ENCODE measurements at regions of chr22 and their contacts with region 1.

Region 1: DNA sequence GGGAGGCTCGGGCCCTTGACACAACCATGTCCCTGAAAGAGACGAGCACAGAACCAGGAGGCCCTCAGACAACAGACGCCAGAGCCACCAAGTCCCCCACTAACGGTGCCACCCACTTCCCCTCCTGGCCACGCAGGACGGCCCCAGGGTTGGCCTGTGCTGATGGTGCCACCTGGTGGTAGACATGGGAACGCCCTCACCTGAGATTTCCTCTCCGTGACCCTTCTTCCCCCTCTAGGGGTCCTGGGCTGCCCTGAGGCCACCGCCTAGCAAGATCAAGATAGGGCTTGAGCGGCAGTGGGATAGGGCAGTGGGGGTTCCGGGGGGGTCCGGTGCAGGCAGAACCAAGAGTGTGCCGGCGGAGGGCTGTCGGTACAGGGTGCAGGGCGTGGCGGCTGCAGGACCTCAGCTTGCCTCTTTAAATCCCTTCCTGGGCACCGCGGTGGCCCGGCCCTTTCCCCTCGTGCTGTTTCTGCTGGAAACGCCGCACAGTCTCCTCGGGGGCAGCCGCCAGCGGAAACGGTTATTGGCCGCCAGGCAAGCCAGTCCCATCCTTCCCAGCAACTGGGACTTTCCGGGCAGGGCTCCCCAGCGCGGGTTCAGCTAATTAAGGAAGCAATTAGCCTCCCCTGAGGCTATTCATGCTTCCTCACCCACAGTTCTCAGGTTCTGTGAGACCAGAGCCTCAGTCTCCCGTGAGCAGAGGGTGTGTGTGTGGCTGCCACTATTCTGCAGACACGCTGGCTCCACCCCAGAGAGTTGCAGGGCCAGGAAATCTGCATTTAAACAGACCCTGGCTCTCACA is 5.5 kb upstream of the NFAM1 start:
- DNase-seq: peak; percentile 60 to 94 (median 76)
- ATAC-seq: peak; percentile 92
- H3K4me3 ChIP-seq: peak overlapping the region; percentile 42 to 47
- H3K27ac ChIP-seq: peak overlapping the region in 1 of 2 donors; percentile 76
- H3K4me1 ChIP-seq: peaks cover 16 to 79% of the 10 kb centered on the region in 2 donors
- H3K27me3 ChIP-seq: peaks cover 0 to 3% of the 10 kb centered on the region in 2 donors
- CTCF ChIP-seq: peak; percentile 94 to 98

Region 2: DNA sequence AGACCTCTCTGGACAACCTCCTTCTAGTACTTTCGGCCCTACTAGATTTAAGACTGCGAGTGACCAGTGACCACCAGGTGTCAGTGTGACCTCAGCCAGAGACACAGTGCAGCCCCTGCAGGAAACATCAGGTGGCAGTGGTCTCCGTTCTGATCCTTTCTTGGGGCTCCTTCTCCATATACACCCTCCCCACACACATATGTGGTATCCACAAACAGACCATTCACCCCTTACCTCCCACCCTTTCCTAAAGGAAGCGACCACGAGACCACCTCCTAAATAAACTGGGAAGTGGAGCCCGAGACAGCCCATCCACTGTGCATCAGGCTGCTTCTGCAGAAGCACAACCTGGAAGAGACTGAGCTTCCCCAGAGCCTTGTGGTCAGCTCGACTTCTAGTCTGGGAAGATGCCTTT is 268.6 kb before region 1 on chr22:
- intact Hi-C with region 1: loop called in 1 of 2 experiments (anchors 5 kb)
- DNase-seq: peak in 3 of 4 donors; percentile 55 to 88 (median 68)
- ATAC-seq: peak; percentile 88
- H3K4me3 ChIP-seq: no peak overlapping the region
- H3K27ac ChIP-seq: no peak overlapping the region
- H3K4me1 ChIP-seq: no peaks in the 10 kb centered on the region
- H3K27me3 ChIP-seq: no peaks in the 10 kb centered on the region
- CTCF ChIP-seq: peak; percentile 58 to 70

Region 3: GRCh38 chr22:42202669-42203068 is 235.0 kb before region 1 on chr22:
- intact Hi-C with region 1: no loop called
- DNase-seq: no peak
- ATAC-seq: no peak
- H3K4me3 ChIP-seq: no peak overlapping the region
- H3K27ac ChIP-seq: no peak overlapping the region
- H3K4me1 ChIP-seq: peaks cover 0 to 6% of the 10 kb centered on the region in 2 donors
- H3K27me3 ChIP-seq: no peaks in the 10 kb centered on the region
- CTCF ChIP-seq: no peak

Region 4: DNA sequence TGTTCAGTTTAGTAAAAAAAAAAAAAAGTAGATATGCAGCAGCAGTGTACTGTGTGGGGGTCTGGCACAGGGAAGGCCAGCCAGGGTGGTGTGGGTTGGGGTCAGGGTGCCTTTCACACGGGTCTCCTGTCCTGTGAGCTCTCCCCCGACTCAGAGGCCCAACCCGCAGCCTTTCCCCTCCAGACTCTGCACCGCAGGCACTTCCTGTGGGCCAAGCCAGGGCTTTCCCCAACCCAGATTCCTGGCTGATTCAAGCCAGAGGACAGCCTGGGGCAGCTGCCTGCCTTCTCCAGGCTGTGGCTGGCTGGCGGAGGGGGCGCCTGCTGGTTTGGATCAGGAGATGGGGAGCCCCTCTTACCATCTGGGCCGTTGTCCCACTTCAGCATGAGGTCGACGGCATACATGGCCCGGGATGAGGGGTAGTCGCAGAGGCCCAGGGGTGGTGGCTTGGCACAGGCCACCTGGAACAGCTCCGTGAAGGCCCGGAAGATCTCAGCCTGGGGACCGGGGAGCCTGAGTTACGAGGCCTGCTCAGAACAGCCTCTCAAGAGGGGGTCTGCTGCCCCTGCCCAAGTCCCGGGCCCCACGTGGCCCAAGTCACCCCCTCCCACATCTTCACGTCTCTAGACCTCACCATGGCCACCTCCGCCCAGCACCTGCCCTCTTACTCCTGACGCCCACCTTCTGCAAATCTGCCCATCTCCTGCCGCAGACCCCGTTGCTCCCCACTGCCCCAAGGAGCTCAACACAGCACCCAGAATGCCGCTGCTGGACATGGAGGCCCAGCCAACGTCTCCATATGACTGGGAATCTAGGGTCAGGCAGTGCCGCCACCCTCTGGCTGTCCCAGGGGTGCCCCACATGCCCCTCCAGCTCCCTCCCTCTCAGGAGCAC is 731.0 kb after region 1 on chr22:
- intact Hi-C with region 1: no loop called
- DNase-seq: no peak
- ATAC-seq: no peak
- H3K4me3 ChIP-seq: no peak overlapping the region
- H3K27ac ChIP-seq: no peak overlapping the region
- H3K4me1 ChIP-seq: peaks cover 3 to 20% of the 10 kb centered on the region in 2 donors
- H3K27me3 ChIP-seq: no peaks in the 10 kb centered on the region
- CTCF ChIP-seq: no peak

Measured in left lung (tissue), 14 donors.